CD8-positive, alpha-beta T cell (primary cell): ENCODE measurements at regions of chr7 and their contacts with region 1.

Region 1: DNA sequence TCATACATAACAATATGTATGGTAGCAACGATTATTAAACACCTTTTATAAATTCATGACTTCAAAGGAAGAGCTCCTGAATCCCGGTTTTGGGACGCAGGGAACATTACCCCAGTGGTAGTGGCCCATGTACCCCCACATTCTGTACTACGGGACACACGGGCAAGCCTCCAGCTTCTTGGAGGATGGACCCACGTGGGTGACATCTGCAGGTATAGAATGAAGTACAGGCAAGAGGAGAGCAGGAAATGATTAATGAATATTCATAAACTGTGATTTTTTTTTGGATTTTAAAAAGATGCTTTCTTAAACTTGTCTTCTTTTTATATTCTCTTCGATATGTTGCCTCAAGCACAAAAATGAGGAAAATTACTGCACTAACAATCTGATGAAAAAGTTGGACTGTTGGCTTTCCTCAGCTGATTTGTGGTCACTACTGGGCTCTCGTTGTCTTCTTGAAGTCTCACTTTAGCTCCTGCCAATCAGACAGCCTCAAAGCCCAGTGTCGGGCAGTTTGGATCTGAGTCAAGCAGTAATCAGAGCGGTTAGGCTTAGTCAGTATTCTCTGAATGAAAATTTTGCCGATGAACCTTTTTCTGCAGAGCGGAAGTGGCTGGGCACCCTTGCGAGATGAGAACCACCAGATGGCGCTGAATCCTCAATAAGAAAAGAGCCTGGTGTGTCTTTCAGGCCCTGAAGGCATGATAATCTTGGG is 157.7 kb upstream of the CDCA7L start:
- DNase-seq: peak in 8 of 9 experiments; percentile 14 to 73 (median 56)
- ATAC-seq: peak; percentile 48
- H3K4me3 ChIP-seq: no peak overlapping the region
- H3K4me3 Mint-ChIP-seq: no peak overlapping the region
- H3K27ac ChIP-seq: no peak overlapping the region
- H3K27ac Mint-ChIP-seq: no peak overlapping the region
- H3K4me1 ChIP-seq: no peaks in the 10 kb centered on the region
- H3K4me1 Mint-ChIP-seq: peaks cover 3% of the 10 kb centered on the region
- H3K27me3 ChIP-seq: no peaks in the 10 kb centered on the region
- H3K27me3 Mint-ChIP-seq: peaks cover 10% of the 10 kb centered on the region
- CTCF ChIP-seq: peak; percentile 65

Region 2: DNA sequence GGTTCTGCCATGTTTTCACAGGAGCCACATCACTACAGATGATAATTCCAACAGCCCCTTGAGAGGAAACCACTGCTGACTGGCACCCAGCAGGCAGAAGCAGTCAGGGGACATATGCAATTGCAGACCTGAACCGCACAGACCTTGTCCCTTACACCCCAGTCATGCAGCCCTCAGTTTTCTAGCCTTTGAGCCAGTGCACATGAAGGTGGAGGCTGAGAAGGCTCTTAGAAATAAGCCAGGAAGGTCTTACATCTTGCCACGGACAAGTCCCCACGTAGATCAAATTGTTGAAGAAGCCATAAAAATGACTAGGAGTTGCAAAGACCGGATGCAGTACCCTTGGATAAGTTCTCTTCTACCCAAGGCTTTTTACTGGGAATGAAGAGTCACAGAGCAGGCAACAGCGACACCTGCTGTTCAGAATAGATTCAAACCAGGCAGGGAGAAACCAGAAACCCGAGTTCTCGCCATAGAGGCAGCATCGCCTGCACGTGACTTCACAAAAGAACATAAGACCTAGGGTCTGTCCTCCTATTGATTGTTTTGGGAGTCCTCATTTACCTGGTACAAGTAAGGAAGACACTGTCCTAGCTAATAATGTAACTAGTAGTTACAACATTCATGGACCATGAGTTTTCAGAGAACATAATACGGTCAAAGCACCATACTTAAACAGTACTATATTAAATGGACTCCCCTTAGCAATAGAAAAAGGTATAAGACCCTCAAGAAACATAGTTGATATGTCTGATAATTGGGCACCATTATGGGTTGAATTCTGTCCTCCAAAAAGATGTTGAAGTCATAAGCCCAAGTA is 385.4 kb after region 1 on chr7:
- CTCF ChIA-PET with region 1: interaction called, 29 read pairs
- POLR2A ChIA-PET with region 1: no interaction called
- intact Hi-C with region 1: loop called (anchors 1 to 2 kb)
- DNase-seq: peak; percentile 26 to 74 (median 55)
- ATAC-seq: peak; percentile 46
- H3K4me3 ChIP-seq: no peak overlapping the region
- H3K4me3 Mint-ChIP-seq: no peak overlapping the region
- H3K27ac ChIP-seq: no peak overlapping the region
- H3K27ac Mint-ChIP-seq: no peak overlapping the region
- H3K4me1 ChIP-seq: no peaks in the 10 kb centered on the region
- H3K4me1 Mint-ChIP-seq: no peaks in the 10 kb centered on the region
- H3K27me3 ChIP-seq: no peaks in the 10 kb centered on the region
- H3K27me3 Mint-ChIP-seq: peaks cover 9% of the 10 kb centered on the region
- CTCF ChIP-seq: peak; percentile 83